A673 (cell line): ENCODE measurements at regions of chr2 and their contacts with region 1.

Region 1: DNA sequence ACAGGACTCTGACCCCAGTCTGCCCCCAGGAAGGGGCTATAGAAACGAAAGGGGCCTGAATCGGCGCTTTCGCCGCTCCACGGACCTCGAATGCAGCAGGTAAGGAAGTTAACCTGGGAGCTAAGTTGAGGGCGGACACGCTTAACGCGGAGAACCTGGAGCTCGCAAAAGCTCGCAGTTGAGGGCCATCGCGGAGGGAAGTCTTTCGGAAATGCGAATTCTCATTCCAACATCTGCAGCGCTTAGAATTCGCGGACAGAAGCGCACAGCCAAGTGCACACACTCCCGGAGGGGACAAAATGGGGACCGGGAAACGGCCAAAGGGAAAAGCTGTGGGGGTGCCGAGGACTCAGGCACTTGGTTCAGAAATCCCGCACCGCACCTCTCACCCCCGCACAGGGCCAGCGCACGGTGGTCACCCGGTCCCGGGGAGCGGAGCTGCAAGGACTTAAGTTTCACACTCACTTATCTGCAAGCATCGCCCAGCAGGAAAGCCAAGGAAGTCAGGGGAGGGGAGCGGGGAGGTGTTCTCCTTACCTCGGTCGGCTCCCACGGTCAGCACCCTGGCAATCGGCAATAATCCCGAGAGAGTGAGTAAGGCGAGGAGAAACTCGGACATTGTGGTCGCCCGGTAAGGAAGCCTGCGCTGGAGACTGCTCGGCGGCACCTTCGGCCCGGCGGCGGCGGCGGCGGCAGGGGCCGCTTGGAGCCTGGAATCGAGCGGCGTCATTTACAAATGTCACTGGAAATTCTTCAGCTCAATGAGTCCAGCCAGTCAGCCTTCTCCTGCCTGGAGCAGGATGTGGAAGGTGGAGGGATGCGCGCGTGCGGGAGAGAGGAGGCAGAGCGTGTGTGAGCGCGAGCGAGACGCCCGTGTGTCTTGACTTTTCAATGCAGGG is 456 bp downstream of the LRP1B start:
- DNase-seq: peak; percentile 78
- H3K4me3 ChIP-seq: peak overlapping the region; percentile 73
- H3K27ac ChIP-seq: peak overlapping the region; percentile 89
- H3K4me1 ChIP-seq: peaks cover 24% of the 10 kb centered on the region
- H3K27me3 ChIP-seq: no peaks in the 10 kb centered on the region
- CTCF ChIP-seq: no peak

Region 2: DNA sequence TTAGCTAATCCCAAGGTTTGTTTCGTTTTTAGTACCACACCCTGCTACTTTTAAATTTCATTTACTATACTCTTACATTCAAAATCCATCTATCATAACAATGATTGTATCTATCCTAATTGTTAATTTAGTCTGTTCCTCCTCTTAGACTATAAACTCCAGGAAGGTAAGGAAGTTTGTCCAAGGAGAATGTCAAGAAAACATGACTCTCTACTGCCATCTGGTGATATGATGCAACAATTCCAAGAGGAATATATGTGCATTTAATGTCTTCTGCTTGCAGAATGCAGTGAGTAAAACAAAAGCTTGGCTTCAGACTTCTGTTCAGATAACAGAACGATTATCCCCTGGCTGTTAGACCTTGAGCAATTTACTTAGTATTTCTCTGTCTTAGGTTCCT is 1266.6 kb before region 1 on chr2:
- CTCF ChIA-PET with region 1: no interaction called
- POLR2A ChIA-PET with region 1: no interaction called
- intact Hi-C with region 1: loop called (anchors 10 kb)
- DNase-seq: peak; percentile 79
- H3K4me3 ChIP-seq: no peak overlapping the region
- H3K27ac ChIP-seq: no peak overlapping the region
- H3K4me1 ChIP-seq: peaks cover 9% of the 10 kb centered on the region
- H3K27me3 ChIP-seq: no peaks in the 10 kb centered on the region
- CTCF ChIP-seq: peak; percentile 67

Region 3: DNA sequence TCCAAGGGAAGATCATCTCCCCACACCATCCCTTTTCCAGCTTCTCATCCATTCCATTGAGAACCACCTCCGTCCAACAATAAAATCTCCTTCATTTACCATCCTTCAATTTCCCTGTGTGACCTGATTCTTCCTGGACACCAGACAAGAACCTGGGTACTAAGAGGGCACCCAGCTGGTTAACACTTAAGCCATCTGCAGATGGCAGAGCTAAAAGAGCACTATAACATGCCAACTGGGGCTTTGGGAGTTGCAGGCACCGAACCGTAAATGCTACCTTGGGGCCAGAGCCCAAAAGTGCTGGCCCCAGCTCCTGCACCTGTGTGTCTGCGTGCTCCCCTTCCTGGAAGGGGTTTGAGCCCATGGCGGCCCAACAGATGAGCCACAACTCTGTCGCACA is 654.6 kb before region 1 on chr2:
- CTCF ChIA-PET with region 1: no interaction called
- POLR2A ChIA-PET with region 1: no interaction called
- intact Hi-C with region 1: loop called (anchors 10 kb)
- DNase-seq: no peak
- H3K4me3 ChIP-seq: no peak overlapping the region
- H3K27ac ChIP-seq: no peak overlapping the region
- H3K4me1 ChIP-seq: peaks cover 14% of the 10 kb centered on the region
- H3K27me3 ChIP-seq: no peaks in the 10 kb centered on the region
- CTCF ChIP-seq: no peak

Region 4: DNA sequence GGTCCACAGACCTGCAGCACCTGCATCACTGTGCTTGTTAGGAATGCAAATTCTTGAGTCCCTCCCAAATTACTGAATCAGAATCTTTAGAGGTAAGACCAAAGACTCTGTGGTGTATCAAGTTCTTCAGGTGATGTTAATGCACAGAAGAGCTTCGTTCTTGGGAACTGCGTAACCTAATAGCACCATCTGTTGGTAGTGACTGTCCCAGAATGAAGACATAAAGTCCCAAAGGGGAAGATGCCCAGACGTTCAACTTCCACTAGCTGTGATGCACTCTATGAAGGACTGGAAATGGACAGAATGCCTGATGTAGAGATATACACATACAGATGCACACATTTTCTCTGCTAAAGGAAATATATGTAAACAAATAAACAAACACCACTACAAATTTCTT is 575.5 kb before region 1 on chr2:
- CTCF ChIA-PET with region 1: no interaction called
- POLR2A ChIA-PET with region 1: no interaction called
- intact Hi-C with region 1: loop called (anchors 5 kb)
- DNase-seq: peak; percentile 74
- H3K4me3 ChIP-seq: no peak overlapping the region
- H3K27ac ChIP-seq: no peak overlapping the region
- H3K4me1 ChIP-seq: peaks cover 21% of the 10 kb centered on the region
- H3K27me3 ChIP-seq: no peaks in the 10 kb centered on the region
- CTCF ChIP-seq: peak; percentile 76

Region 5: GRCh38 chr2:142052220-142052863 is 78.0 kb before region 1 on chr2:
- CTCF ChIA-PET with region 1: no interaction called
- POLR2A ChIA-PET with region 1: no interaction called
- intact Hi-C with region 1: no loop called
- DNase-seq: no peak
- H3K4me3 ChIP-seq: no peak overlapping the region
- H3K27ac ChIP-seq: no peak overlapping the region
- H3K4me1 ChIP-seq: no peaks in the 10 kb centered on the region
- H3K27me3 ChIP-seq: no peaks in the 10 kb centered on the region
- CTCF ChIP-seq: no peak

Region 6: DNA sequence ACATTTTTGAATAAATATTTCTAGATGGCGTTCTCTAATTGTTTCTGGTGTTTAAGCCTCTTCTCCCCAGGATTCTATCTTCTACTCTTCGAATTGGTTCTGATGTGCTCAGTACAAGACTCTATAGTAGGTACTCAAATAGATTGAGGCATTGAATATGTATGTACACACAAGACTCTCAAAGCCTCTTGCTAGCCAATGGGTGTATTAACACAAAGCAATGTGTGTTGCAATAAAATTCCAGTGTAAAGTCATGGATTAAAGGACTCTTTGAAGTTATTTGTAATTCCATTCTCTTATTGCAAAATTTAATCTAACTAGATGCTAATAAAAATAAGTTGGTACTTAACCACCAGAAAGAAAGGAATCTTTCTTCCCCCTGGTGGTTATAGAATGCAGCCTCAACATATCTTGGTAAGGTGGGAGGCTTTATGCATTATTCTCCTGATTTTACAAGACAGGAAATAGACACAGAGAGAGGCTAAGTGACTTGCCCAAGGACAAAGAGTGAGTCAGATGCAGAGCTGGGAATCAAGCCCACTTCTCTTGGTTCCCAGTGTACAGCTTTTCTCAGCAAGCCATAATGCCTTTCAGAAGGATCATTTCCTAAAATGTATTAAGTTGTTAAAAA is 17.6 kb before region 1 on chr2:
- CTCF ChIA-PET with region 1: interaction called, 19 read pairs
- POLR2A ChIA-PET with region 1: no interaction called
- intact Hi-C with region 1: no loop called
- DNase-seq: peak; percentile 98
- H3K4me3 ChIP-seq: no peak overlapping the region
- H3K27ac ChIP-seq: peak overlapping the region; percentile 55
- H3K4me1 ChIP-seq: peaks cover 28% of the 10 kb centered on the region
- H3K27me3 ChIP-seq: no peaks in the 10 kb centered on the region
- CTCF ChIP-seq: peak; percentile 70